CD8-positive, alpha-beta T cell (primary cell): ENCODE measurements at regions of chr2 and their contacts with region 1.

Region 1: GRCh38 chr2:203730076-203730729 is 23.8 kb downstream of the CD28 start:
- DNase-seq: no peak
- ATAC-seq: peak; percentile 43
- H3K4me3 ChIP-seq: no peak overlapping the region
- H3K4me3 Mint-ChIP-seq: peak overlapping the region; percentile 42
- H3K27ac ChIP-seq: no peak overlapping the region
- H3K27ac Mint-ChIP-seq: peak overlapping the region; percentile 63
- H3K4me1 ChIP-seq: peaks cover 58% of the 10 kb centered on the region
- H3K4me1 Mint-ChIP-seq: peaks cover 88% of the 10 kb centered on the region
- H3K27me3 ChIP-seq: no peaks in the 10 kb centered on the region
- H3K27me3 Mint-ChIP-seq: no peaks in the 10 kb centered on the region
- CTCF ChIP-seq: no peak

Region 2: GRCh38 chr2:203648273-203648672 is 81.9 kb before region 1 on chr2:
- CTCF ChIA-PET with region 1: no interaction called
- POLR2A ChIA-PET with region 1: no interaction called
- intact Hi-C with region 1: no loop called
- DNase-seq: no peak
- ATAC-seq: no peak
- H3K4me3 ChIP-seq: no peak overlapping the region
- H3K4me3 Mint-ChIP-seq: no peak overlapping the region
- H3K27ac ChIP-seq: no peak overlapping the region
- H3K27ac Mint-ChIP-seq: no peak overlapping the region
- H3K4me1 ChIP-seq: no peaks in the 10 kb centered on the region
- H3K4me1 Mint-ChIP-seq: peaks cover 10% of the 10 kb centered on the region
- H3K27me3 ChIP-seq: no peaks in the 10 kb centered on the region
- H3K27me3 Mint-ChIP-seq: no peaks in the 10 kb centered on the region
- CTCF ChIP-seq: no peak

Region 3: GRCh38 chr2:203688798-203689197 is 41.4 kb before region 1 on chr2:
- CTCF ChIA-PET with region 1: no interaction called
- POLR2A ChIA-PET with region 1: no interaction called
- intact Hi-C with region 1: no loop called
- DNase-seq: no peak
- ATAC-seq: no peak
- H3K4me3 ChIP-seq: no peak overlapping the region
- H3K4me3 Mint-ChIP-seq: no peak overlapping the region
- H3K27ac ChIP-seq: no peak overlapping the region
- H3K27ac Mint-ChIP-seq: no peak overlapping the region
- H3K4me1 ChIP-seq: peaks cover 3% of the 10 kb centered on the region
- H3K4me1 Mint-ChIP-seq: peaks cover 26% of the 10 kb centered on the region
- H3K27me3 ChIP-seq: no peaks in the 10 kb centered on the region
- H3K27me3 Mint-ChIP-seq: no peaks in the 10 kb centered on the region
- CTCF ChIP-seq: no peak

Region 4: GRCh38 chr2:203718087-203718486 is 12.1 kb before region 1 on chr2:
- CTCF ChIA-PET with region 1: interaction called, 25 read pairs
- POLR2A ChIA-PET with region 1: interaction called, 61 read pairs
- intact Hi-C with region 1: loop called in 1 of 2 experiments (anchors 1 kb)
- DNase-seq: peak in 7 of 9 experiments; percentile 42 to 83 (median 68)
- ATAC-seq: peak; percentile 42
- H3K4me3 ChIP-seq: peak overlapping the region in 1 of 2 experiments; percentile 10
- H3K4me3 Mint-ChIP-seq: peak overlapping the region; percentile 59
- H3K27ac ChIP-seq: peak overlapping the region; percentile 39 to 57
- H3K27ac Mint-ChIP-seq: peak overlapping the region; percentile 95
- H3K4me1 ChIP-seq: peaks cover 98% of the 10 kb centered on the region
- H3K4me1 Mint-ChIP-seq: peaks cover 98% of the 10 kb centered on the region
- H3K27me3 ChIP-seq: no peaks in the 10 kb centered on the region
- H3K27me3 Mint-ChIP-seq: no peaks in the 10 kb centered on the region
- CTCF ChIP-seq: no peak

Region 5: GRCh38 chr2:203751685-203752271 is 21.6 kb after region 1 on chr2:
- CTCF ChIA-PET with region 1: no interaction called
- POLR2A ChIA-PET with region 1: interaction called, 7 read pairs
- intact Hi-C with region 1: loop called in 1 of 2 experiments (anchors 2 kb)
- DNase-seq: no peak
- ATAC-seq: no peak
- H3K4me3 ChIP-seq: no peak overlapping the region
- H3K4me3 Mint-ChIP-seq: no peak overlapping the region
- H3K27ac ChIP-seq: no peak overlapping the region
- H3K27ac Mint-ChIP-seq: peak overlapping the region; percentile 43
- H3K4me1 ChIP-seq: peaks cover 13% of the 10 kb centered on the region
- H3K4me1 Mint-ChIP-seq: peaks cover 53% of the 10 kb centered on the region
- H3K27me3 ChIP-seq: no peaks in the 10 kb centered on the region
- H3K27me3 Mint-ChIP-seq: no peaks in the 10 kb centered on the region
- CTCF ChIP-seq: no peak

Region 6: GRCh38 chr2:203824057-203824456 is 93.9 kb after region 1 on chr2:
- CTCF ChIA-PET with region 1: no interaction called
- POLR2A ChIA-PET with region 1: no interaction called
- intact Hi-C with region 1: no loop called
- DNase-seq: no peak
- ATAC-seq: no peak
- H3K4me3 ChIP-seq: no peak overlapping the region
- H3K4me3 Mint-ChIP-seq: no peak overlapping the region
- H3K27ac ChIP-seq: no peak overlapping the region
- H3K27ac Mint-ChIP-seq: no peak overlapping the region
- H3K4me1 ChIP-seq: no peaks in the 10 kb centered on the region
- H3K4me1 Mint-ChIP-seq: peaks cover 3% of the 10 kb centered on the region
- H3K27me3 ChIP-seq: no peaks in the 10 kb centered on the region
- H3K27me3 Mint-ChIP-seq: no peaks in the 10 kb centered on the region
- CTCF ChIP-seq: no peak